Testis (tissue), 5 donors: ENCODE measurements at regions of chr10 and their contacts with region 1.

Region 1: GRCh38 chr10:44857363-44858016 is 53.6 kb upstream of the TMEM72 start:
- DNase-seq: peak; percentile 79
- H3K4me3 ChIP-seq: no peak overlapping the region
- H3K27ac ChIP-seq: no peak overlapping the region
- H3K4me1 ChIP-seq: no peaks in the 10 kb centered on the region
- H3K27me3 ChIP-seq: no peaks in the 10 kb centered on the region
- CTCF ChIP-seq: peak; percentile 85 to 97 (median 92)
- POLR2A ChIP-seq: no peak

Region 2: GRCh38 chr10:43671656-43672531 is 1185.6 kb before region 1 on chr10:
- intact Hi-C with region 1: loop called (anchors 5 kb)
- DNase-seq: peak; percentile 75
- H3K4me3 ChIP-seq: no peak overlapping the region
- H3K27ac ChIP-seq: no peak overlapping the region
- H3K4me1 ChIP-seq: peaks cover 6% of the 10 kb centered on the region
- H3K27me3 ChIP-seq: no peaks in the 10 kb centered on the region
- CTCF ChIP-seq: peak; percentile 81 to 89 (median 82)
- POLR2A ChIP-seq: no peak

Region 3: DNA sequence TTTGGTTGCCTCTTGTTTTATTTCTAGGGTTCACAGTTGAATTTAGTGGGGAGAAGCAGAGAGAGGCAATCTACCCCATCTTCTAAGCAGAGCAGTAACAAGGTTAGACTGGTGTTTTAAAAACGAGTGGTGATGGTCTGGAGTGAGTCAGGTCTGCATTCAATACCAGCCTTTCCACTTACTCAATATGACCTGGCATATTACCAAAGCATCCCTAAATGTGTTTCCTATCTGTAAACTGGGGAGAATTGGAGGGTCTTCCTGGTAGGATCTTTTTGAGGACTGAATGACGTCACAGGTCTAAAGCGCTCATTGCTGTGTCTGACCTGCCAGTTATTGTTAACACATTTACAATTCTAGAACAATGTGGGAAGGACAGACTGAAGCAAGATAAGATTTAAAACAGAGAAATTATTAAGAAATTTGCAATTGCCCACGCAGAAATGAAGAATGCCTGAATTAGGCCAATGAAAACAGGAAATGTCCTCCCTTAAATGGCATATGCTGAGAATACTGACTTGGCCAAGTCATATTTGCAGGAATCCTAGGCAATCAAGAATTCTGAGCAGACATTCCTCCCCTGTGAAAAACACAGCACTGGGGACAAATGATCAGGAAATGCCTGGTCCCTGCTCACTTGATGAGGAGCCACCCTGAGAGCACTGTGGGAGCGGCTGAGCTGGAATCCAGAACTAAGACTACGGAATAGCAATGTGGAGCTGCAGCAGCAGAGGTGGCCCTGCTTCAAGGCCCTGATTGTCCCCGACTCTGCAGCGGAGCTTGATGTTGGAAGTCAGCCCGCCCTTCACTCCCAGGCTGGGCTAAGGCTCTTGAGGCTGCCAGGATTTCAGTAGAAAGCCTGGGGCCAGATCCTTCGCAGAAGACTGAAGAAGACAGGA is 288.0 kb before region 1 on chr10:
- intact Hi-C with region 1: no loop called
- DNase-seq: peak; percentile 42
- H3K4me3 ChIP-seq: no peak overlapping the region
- H3K27ac ChIP-seq: no peak overlapping the region
- H3K4me1 ChIP-seq: peaks cover 13% of the 10 kb centered on the region
- H3K27me3 ChIP-seq: no peaks in the 10 kb centered on the region
- CTCF ChIP-seq: no peak
- POLR2A ChIP-seq: no peak

Region 4: DNA sequence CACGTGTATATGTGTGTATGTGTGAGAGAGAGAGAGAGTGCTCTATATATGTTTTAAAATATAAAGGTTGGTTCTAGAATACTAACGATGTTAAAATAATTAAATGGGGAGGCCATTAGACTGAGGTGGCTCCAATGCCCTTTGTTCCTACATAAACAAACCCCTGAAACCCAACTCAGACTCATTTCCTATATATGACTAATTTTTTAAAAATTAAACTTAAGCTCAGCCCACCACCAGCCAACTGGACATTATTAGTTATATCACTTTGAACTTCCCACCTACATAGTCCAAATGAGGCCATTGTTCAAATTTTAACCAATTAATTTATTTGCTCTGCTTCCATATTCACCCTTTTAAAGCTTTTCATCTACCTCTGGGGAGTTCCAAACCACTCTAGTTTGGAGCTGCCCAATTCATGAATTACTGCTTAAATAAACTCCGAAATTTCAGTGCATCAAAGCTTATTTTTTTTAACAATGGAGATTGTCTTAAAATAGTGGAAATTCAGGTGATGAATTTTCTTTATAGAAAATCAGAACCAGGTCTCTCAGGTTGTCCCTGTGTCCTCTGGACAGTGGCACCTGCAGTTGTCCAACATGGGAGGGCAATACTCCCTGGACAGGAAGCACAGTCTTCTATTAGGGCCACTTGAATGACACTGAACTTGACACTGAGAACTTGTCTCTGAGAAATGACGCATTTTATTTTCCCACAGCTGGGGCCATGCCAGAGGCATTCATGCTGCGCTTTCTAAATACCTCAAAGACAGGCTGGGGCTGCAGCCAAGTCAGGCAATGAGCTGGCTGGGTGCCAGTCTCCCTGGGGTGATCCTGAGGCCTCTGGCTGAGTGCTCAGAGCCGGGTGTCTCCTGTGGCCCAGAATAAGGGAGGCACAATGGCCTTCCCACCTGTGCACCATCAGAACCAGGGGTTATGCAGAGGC is 55.8 kb before region 1 on chr10:
- intact Hi-C with region 1: no loop called
- DNase-seq: peak; percentile 89
- H3K4me3 ChIP-seq: no peak overlapping the region
- H3K27ac ChIP-seq: no peak overlapping the region
- H3K4me1 ChIP-seq: no peaks in the 10 kb centered on the region
- H3K27me3 ChIP-seq: no peaks in the 10 kb centered on the region
- CTCF ChIP-seq: no peak
- POLR2A ChIP-seq: no peak